ENCODE measurements at regions of chr12 and their contacts with region 1.

Region 1: GRCh38 chr12:110888256-110888991 is 32.0 kb downstream of the MYL2 start:
- DNase-seq: no peak
- H3K4me3 ChIP-seq: peak overlapping the region in 39 of 59 donors; percentile 25 to 68 (median 56)
- H3K27ac ChIP-seq: peak overlapping the region in 3 of 59 donors; percentile 14 to 61 (median 61)
- H3K27me3 ChIP-seq: peaks cover 0 to 5% (median 0%) of the 10 kb centered on the region in 45 donors
- CTCF ChIP-seq: peak in 14 of 56 donors; percentile 2 to 42 (median 10)

Region 2: GRCh38 chr12:110619534-110619953 is 268.9 kb before region 1 on chr12:
- intact Hi-C with region 1: loop called in 1 of 2 experiments (anchors 5 kb)
- DNase-seq: no peak
- H3K4me3 ChIP-seq: no peak overlapping the region
- H3K27ac ChIP-seq: no peak overlapping the region
- H3K27me3 ChIP-seq: no peaks in the 10 kb centered on the region
- CTCF ChIP-seq: no peak

Region 3: GRCh38 chr12:110687396-110688169 is 200.8 kb before region 1 on chr12:
- intact Hi-C with region 1: no loop called
- DNase-seq: no peak
- H3K4me3 ChIP-seq: peak overlapping the region in 36 of 59 donors; percentile 4 to 78 (median 68)
- H3K27ac ChIP-seq: no peak overlapping the region
- H3K27me3 ChIP-seq: peaks cover 0 to 22% (median 0%) of the 10 kb centered on the region in 45 donors
- CTCF ChIP-seq: no peak

Region 4: DNA sequence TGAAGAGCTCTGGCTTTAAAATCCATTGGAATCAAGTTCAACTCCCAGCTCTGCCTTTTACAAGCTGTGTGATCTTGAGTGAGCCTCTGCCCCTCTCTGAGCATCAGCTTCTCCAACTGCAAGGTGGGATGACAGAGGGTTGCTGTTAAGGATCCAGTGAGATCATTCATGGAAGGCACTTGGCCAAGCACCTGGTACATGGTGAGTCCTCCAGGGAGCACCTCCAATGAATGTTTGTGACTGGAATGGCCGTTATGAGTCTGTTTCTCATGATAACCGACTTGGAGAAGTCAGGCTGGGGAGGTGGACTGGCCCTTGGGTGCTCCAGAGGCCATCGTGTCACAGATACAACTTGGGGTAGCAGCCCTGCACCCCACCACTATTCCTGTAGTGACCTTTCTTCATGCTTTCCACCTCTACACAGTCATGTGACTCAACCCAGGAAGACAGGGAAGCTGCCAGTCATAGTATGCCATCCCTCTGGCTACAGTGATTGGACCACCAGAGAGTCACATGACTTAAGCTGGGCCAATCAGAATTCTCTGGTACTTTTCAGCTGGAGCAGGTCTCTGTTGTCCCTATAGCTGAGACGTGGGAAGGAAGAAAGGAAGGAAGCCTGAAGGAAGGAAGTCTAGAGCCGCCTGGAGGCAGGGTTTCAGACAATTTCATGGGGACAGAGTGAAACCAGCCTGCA is 178.5 kb after region 1 on chr12:
- intact Hi-C with region 1: no loop called
- DNase-seq: no peak
- H3K4me3 ChIP-seq: no peak overlapping the region
- H3K27ac ChIP-seq: no peak overlapping the region
- H3K27me3 ChIP-seq: peaks cover 0 to 17% (median 0%) of the 10 kb centered on the region in 45 donors
- CTCF ChIP-seq: no peak

Measured in dorsolateral prefrontal cortex (tissue), 120 donors.